CD8-positive, alpha-beta T cell (primary cell): ENCODE measurements at regions of chr1 and their contacts with region 1.

Region 1: GRCh38 chr1:88683541-88684481 is at the start of gene PKN2:
- DNase-seq: peak; percentile 92 to 100 (median 98)
- ATAC-seq: peak; percentile 93
- H3K4me3 ChIP-seq: peak within 1 kb of the TSS; percentile 51 to 85
- H3K4me3 Mint-ChIP-seq: peak within 1 kb of the TSS; percentile 91
- H3K27ac ChIP-seq: peak within 1 kb of the TSS; percentile 94
- H3K27ac Mint-ChIP-seq: peak within 1 kb of the TSS; percentile 96
- H3K4me1 ChIP-seq: peaks cover 32% of the 10 kb centered on the region
- H3K4me1 Mint-ChIP-seq: peaks cover 34% of the 10 kb centered on the region
- H3K27me3 ChIP-seq: no peaks in the 10 kb centered on the region
- H3K27me3 Mint-ChIP-seq: no peaks in the 10 kb centered on the region
- CTCF ChIP-seq: peak; percentile 16
- total RNA-seq, gene PKN2: 42.3 to 43.7 TPM

Region 2: GRCh38 chr1:88655685-88656299 is 28.0 kb before region 1 on chr1:
- CTCF ChIA-PET with region 1: interaction called, 22 read pairs
- POLR2A ChIA-PET with region 1: interaction called, 5 read pairs
- intact Hi-C with region 1: loop called (anchors 1 to 2 kb)
- DNase-seq: peak in 2 of 9 experiments; percentile 44 to 59
- ATAC-seq: no peak
- H3K4me3 ChIP-seq: no peak overlapping the region
- H3K4me3 Mint-ChIP-seq: no peak overlapping the region
- H3K27ac ChIP-seq: no peak overlapping the region
- H3K27ac Mint-ChIP-seq: no peak overlapping the region
- H3K4me1 ChIP-seq: peaks cover 8% of the 10 kb centered on the region
- H3K4me1 Mint-ChIP-seq: peaks cover 12% of the 10 kb centered on the region
- H3K27me3 ChIP-seq: peaks cover 0 to 2% of the 10 kb centered on the region in 2 experiments
- H3K27me3 Mint-ChIP-seq: no peaks in the 10 kb centered on the region
- CTCF ChIP-seq: peak; percentile 82

Region 3: DNA sequence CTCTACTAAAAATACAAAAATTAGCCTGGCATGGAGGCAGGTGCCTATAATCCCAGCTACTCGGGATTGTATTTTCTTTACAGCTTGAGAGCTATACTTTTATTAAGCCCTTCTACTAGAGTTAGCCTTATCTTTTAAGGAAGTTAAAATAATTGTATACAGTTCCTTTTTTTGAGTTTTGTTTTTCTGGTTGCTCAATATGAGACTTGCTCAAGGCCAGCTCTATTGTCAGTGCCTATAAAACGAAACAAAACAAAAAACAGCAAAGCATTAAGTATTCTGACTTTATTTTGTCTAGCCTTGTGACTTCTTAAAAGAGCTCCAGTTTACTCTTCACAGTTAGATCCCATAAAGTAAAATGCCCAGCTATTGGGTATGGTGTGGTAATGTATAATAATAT is 17.5 kb after region 1 on chr1:
- CTCF ChIA-PET with region 1: interaction called, 3 read pairs
- POLR2A ChIA-PET with region 1: interaction called, 14 read pairs
- intact Hi-C with region 1: no loop called
- DNase-seq: peak in 1 of 9 experiments; percentile 3
- ATAC-seq: no peak
- H3K4me3 ChIP-seq: no peak overlapping the region
- H3K4me3 Mint-ChIP-seq: no peak overlapping the region
- H3K27ac ChIP-seq: no peak overlapping the region
- H3K27ac Mint-ChIP-seq: no peak overlapping the region
- H3K4me1 ChIP-seq: peaks cover 2% of the 10 kb centered on the region
- H3K4me1 Mint-ChIP-seq: peaks cover 51% of the 10 kb centered on the region
- H3K27me3 ChIP-seq: no peaks in the 10 kb centered on the region
- H3K27me3 Mint-ChIP-seq: no peaks in the 10 kb centered on the region
- CTCF ChIP-seq: no peak

Region 4: GRCh38 chr1:88735382-88735781 is 51.6 kb after region 1 on chr1:
- CTCF ChIA-PET with region 1: no interaction called
- POLR2A ChIA-PET with region 1: interaction called, 10 read pairs
- intact Hi-C with region 1: no loop called
- DNase-seq: no peak
- ATAC-seq: no peak
- H3K4me3 ChIP-seq: no peak overlapping the region
- H3K4me3 Mint-ChIP-seq: no peak overlapping the region
- H3K27ac ChIP-seq: no peak overlapping the region
- H3K27ac Mint-ChIP-seq: no peak overlapping the region
- H3K4me1 ChIP-seq: peaks cover 8% of the 10 kb centered on the region
- H3K4me1 Mint-ChIP-seq: peaks cover 42% of the 10 kb centered on the region
- H3K27me3 ChIP-seq: no peaks in the 10 kb centered on the region
- H3K27me3 Mint-ChIP-seq: no peaks in the 10 kb centered on the region
- CTCF ChIP-seq: no peak

Region 5: GRCh38 chr1:88847643-88848042 is 163.8 kb after region 1 on chr1:
- CTCF ChIA-PET with region 1: no interaction called
- POLR2A ChIA-PET with region 1: no interaction called
- intact Hi-C with region 1: no loop called
- DNase-seq: no peak
- ATAC-seq: no peak
- H3K4me3 ChIP-seq: no peak overlapping the region
- H3K4me3 Mint-ChIP-seq: no peak overlapping the region
- H3K27ac ChIP-seq: no peak overlapping the region
- H3K27ac Mint-ChIP-seq: no peak overlapping the region
- H3K4me1 ChIP-seq: no peaks in the 10 kb centered on the region
- H3K4me1 Mint-ChIP-seq: peaks cover 2% of the 10 kb centered on the region
- H3K27me3 ChIP-seq: no peaks in the 10 kb centered on the region
- H3K27me3 Mint-ChIP-seq: no peaks in the 10 kb centered on the region
- CTCF ChIP-seq: no peak

Region 6: DNA sequence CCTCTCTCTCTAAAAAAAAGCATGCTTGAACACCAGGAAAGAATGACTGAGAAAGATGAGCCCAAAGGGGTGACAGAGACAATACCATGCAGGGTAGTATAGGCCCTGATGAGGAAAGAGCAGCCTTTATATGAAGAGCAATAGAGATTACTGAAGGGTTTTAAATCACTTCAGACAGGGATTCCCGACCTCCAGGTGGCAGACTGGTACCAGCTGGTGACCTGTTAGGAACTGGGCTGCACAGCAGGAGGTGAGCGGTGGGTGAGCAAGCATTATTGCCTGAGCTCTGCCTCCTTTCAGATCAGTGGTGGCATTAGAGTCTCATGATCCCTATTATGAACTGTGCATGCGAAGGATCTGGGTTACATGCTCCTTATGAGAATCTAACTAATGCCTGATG is 238.4 kb after region 1 on chr1:
- CTCF ChIA-PET with region 1: no interaction called
- POLR2A ChIA-PET with region 1: no interaction called
- intact Hi-C with region 1: no loop called
- DNase-seq: no peak
- ATAC-seq: no peak
- H3K4me3 ChIP-seq: no peak overlapping the region
- H3K4me3 Mint-ChIP-seq: no peak overlapping the region
- H3K27ac ChIP-seq: no peak overlapping the region
- H3K27ac Mint-ChIP-seq: no peak overlapping the region
- H3K4me1 ChIP-seq: no peaks in the 10 kb centered on the region
- H3K4me1 Mint-ChIP-seq: no peaks in the 10 kb centered on the region
- H3K27me3 ChIP-seq: no peaks in the 10 kb centered on the region
- H3K27me3 Mint-ChIP-seq: no peaks in the 10 kb centered on the region
- CTCF ChIP-seq: no peak

Region 7: GRCh38 chr1:89994805-89995597 is 1311.2 kb after region 1 on chr1 and contains the start of gene ZNF326:
- CTCF ChIA-PET with region 1: no interaction called
- POLR2A ChIA-PET with region 1: no interaction called
- intact Hi-C with region 1: loop called (anchors 10 kb)
- DNase-seq: peak; percentile 89 to 96 (median 93)
- ATAC-seq: peak; percentile 97
- H3K4me3 ChIP-seq: peak within 1 kb of the TSS; percentile 72 to 93
- H3K4me3 Mint-ChIP-seq: peak within 1 kb of the TSS; percentile 99
- H3K27ac ChIP-seq: peak within 1 kb of the TSS; percentile 78 to 82
- H3K27ac Mint-ChIP-seq: peak within 1 kb of the TSS; percentile 96
- H3K4me1 ChIP-seq: peaks cover 25% of the 10 kb centered on the region
- H3K4me1 Mint-ChIP-seq: peaks cover 35% of the 10 kb centered on the region
- H3K27me3 ChIP-seq: no peaks in the 10 kb centered on the region
- H3K27me3 Mint-ChIP-seq: no peaks in the 10 kb centered on the region
- CTCF ChIP-seq: no peak
- total RNA-seq, gene ZNF326: 55.5 to 59.1 TPM